ENCODE measurements at regions of chr15 and their contacts with region 1.

Region 1: GRCh38 chr15:65054333-65055200 is 9.4 kb downstream of the SLC51B start:
- DNase-seq: peak in 8 of 9 experiments; percentile 21 to 66 (median 54)
- ATAC-seq: peak; percentile 54
- H3K4me3 ChIP-seq: no peak overlapping the region
- H3K4me3 Mint-ChIP-seq: no peak overlapping the region
- H3K27ac ChIP-seq: no peak overlapping the region
- H3K27ac Mint-ChIP-seq: no peak overlapping the region
- H3K4me1 ChIP-seq: peaks cover 7% of the 10 kb centered on the region
- H3K4me1 Mint-ChIP-seq: peaks cover 8% of the 10 kb centered on the region
- H3K27me3 ChIP-seq: no peaks in the 10 kb centered on the region
- H3K27me3 Mint-ChIP-seq: no peaks in the 10 kb centered on the region
- CTCF ChIP-seq: peak; percentile 69

Region 2: GRCh38 chr15:65042776-65043327 is 11.7 kb before region 1 on chr15:
- CTCF ChIA-PET with region 1: interaction called, 6 read pairs
- POLR2A ChIA-PET with region 1: no interaction called
- intact Hi-C with region 1: loop called in 1 of 2 experiments (anchors 1 kb)
- DNase-seq: peak in 1 of 9 experiments; percentile 17
- ATAC-seq: no peak
- H3K4me3 ChIP-seq: no peak overlapping the region
- H3K4me3 Mint-ChIP-seq: no peak overlapping the region
- H3K27ac ChIP-seq: no peak overlapping the region
- H3K27ac Mint-ChIP-seq: no peak overlapping the region
- H3K4me1 ChIP-seq: no peaks in the 10 kb centered on the region
- H3K4me1 Mint-ChIP-seq: no peaks in the 10 kb centered on the region
- H3K27me3 ChIP-seq: no peaks in the 10 kb centered on the region
- H3K27me3 Mint-ChIP-seq: peaks cover 4% of the 10 kb centered on the region
- CTCF ChIP-seq: no peak